ENCODE measurements at regions of chr5 and their contacts with region 1.

Region 1: GRCh38 chr5:169954786-169955185 is 25.5 kb downstream of the INSYN2B start:
- DNase-seq: no peak

Region 2: DNA sequence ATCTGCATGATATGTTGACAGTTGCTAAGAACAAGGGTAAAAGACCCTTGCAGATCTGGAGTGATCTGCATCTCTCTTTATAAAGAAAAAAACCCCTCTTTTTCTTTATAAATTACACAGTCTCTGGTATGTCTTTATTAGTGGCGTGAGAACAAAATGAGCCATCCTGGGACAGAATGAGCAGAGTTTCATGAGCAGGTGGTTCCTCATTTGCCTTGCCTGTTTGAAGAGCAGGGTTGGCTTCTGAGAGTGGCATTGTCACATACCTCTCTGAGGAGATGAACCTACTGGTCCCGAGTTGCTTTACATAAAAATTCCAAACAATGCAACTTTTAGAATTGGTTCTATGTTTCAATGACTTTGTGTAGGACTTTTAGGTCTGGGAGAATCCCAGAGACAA is 68.8 kb before region 1 on chr5:
- intact Hi-C with region 1: no loop called
- DNase-seq: no peak

Region 3: DNA sequence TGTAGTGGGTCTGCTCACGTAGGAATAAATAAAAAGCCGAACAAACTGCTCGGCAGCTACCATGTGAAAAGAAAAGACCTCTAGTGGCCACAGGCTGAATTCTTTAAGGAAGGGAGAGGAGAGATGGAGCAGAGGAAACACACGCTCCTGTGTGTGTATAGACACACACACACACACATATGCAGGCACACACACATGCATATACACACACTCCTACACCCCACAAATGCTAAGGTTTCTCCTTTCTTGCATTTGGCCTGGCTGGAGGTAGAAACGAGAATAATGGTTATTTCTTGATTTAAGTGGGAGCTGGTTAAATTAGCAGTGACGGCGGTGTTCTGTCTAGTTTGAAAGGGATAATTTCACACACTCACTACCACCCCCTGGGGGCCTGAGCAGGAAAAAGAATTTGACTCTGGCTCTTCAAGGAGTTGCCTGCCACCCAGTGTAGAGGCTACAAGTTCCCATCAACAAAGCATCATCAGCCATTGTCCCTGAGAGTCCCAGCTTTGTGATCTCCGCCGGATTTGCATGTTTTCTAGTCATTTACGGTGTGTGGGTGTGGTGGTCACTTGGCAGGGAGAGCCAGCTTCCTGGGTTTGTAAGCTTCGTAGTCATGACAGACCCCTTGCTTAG is 25.8 kb after region 1 on chr5 and contains the start of gene INSYN2B:
- intact Hi-C with region 1: loop called in 1 of 2 experiments (anchors 1 kb)
- DNase-seq: peak; percentile 82
- total RNA-seq, gene INSYN2B: 0.19 TPM in 1 of 2 donors, not detected in the other

Measured in posterior vena cava (tissue), 2 donors.